Caco-2 (cell line): ENCODE measurements at regions of chr6 and their contacts with region 1.

Region 1: DNA sequence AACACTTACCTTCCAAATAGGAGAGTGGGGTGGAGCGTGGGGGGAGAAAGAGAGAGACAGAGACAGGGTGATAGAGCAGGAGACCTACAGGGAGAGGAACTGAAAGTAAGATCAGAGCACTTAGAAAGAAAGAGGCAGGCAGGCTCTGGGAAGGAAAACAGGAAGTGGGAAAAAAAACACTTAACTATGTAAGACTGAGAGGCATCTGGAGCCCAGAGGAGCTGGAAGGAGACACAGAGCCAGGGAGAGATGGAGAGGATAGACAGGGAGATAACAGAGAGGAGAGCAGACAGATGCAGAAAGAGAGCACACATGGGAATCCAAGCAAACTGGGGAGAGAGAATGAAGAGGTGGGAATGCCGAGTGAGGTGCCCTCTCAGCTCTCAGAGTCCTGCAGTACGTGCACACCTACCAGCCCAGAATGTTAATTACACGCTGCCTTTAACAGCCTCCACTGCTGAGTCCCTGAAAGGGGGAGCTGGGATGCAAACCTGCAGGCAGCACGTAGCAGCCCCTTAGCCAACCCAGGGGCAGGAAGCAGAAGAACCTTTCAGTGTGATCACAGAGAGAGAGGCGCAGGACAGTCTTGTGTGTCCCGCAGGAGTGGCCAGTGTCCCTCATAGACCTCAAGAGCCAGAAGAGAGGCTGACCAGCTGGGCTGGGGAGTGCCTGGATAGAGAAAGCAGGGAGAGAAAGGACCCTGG is 132.7 kb upstream of the LRFN2 start:
- DNase-seq: no peak
- H3K4me3 ChIP-seq: no peak overlapping the region
- H3K4me3 Mint-ChIP-seq: no peak overlapping the region
- H3K27ac Mint-ChIP-seq: peak overlapping the region; percentile 5
- H3K4me1 ChIP-seq: peaks cover 37% of the 10 kb centered on the region
- H3K4me1 Mint-ChIP-seq: peaks cover 36% of the 10 kb centered on the region
- H3K27me3 ChIP-seq: no peaks in the 10 kb centered on the region
- H3K27me3 Mint-ChIP-seq: no peaks in the 10 kb centered on the region
- CTCF ChIP-seq: no peak

Region 2: GRCh38 chr6:40456390-40457013 is 263.3 kb before region 1 on chr6:
- CTCF ChIA-PET with region 1: no interaction called
- POLR2A ChIA-PET with region 1: no interaction called
- intact Hi-C with region 1: no loop called
- DNase-seq: no peak
- H3K4me3 ChIP-seq: no peak overlapping the region
- H3K4me3 Mint-ChIP-seq: no peak overlapping the region
- H3K27ac Mint-ChIP-seq: no peak overlapping the region
- H3K4me1 ChIP-seq: no peaks in the 10 kb centered on the region
- H3K4me1 Mint-ChIP-seq: no peaks in the 10 kb centered on the region
- H3K27me3 ChIP-seq: no peaks in the 10 kb centered on the region; the same call in 1 of the 2 replicates
- H3K27me3 Mint-ChIP-seq: peaks cover 3% of the 10 kb centered on the region
- CTCF ChIP-seq: no peak

Region 3: GRCh38 chr6:40845553-40845952 is 125.7 kb after region 1 on chr6:
- CTCF ChIA-PET with region 1: no interaction called
- POLR2A ChIA-PET with region 1: no interaction called
- intact Hi-C with region 1: loop called (anchors 10 kb)
- DNase-seq: peak; percentile 54 to 57
- H3K4me3 ChIP-seq: no peak overlapping the region
- H3K4me3 Mint-ChIP-seq: no peak overlapping the region
- H3K27ac Mint-ChIP-seq: no peak overlapping the region
- H3K4me1 ChIP-seq: no peaks in the 10 kb centered on the region
- H3K4me1 Mint-ChIP-seq: no peaks in the 10 kb centered on the region
- H3K27me3 ChIP-seq: no peaks in the 10 kb centered on the region; the same call in 1 of the 2 replicates
- H3K27me3 Mint-ChIP-seq: peaks cover 26% of the 10 kb centered on the region
- CTCF ChIP-seq: peak; percentile 62 to 79

Region 4: DNA sequence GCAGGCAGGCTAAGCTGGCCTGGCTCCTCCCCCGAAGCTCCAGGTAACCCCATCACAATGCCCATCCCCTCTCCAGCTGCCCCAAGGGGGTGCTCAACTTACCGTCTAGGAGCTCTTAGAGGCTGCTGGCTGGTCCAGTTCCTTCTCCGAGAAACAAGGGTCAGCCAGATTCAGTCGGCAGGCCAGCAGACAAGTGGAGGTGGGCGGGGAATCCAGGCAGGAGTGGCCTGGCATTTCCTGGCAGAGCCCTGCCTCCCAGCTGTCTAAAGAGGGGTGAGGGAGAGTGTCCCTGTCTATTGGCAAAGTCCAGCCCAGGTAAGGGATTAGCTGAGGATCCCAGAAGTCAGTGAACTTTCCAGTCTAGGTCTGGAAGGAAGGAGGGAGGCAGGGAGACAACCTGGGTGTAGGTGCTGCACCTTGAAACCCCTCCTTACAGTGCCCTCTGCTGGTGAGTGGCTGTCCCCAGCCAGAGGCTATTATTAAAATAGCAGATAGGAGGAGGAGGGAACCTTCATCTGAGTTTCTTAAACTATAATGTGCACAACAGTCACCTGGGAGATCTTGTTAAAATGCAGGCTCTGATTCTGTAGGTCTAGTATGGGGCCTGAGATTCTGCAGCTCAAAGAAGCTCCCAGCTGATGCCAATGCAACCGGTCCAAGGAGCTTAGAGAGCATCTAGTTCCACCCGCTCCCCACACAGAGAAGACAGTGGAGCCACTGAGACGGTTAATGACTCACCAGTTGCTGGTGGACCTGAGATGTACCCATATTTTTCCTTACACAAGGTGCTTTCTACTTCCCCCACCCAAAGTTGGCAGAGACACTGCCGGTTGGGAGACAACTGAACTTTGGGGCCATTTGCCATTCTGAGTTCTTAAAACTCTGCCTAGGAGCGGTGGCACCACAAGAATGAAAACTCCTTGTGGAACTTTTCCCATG is 319.5 kb after region 1 on chr6 and contains the start of gene UNC5CL:
- CTCF ChIA-PET with region 1: no interaction called
- POLR2A ChIA-PET with region 1: no interaction called
- intact Hi-C with region 1: no loop called
- DNase-seq: peak; percentile 83 to 84
- H3K4me3 ChIP-seq: no peak within 1 kb of the TSS
- H3K4me3 Mint-ChIP-seq: peak within 1 kb of the TSS; percentile 63
- H3K27ac Mint-ChIP-seq: peak within 1 kb of the TSS; percentile 96
- H3K4me1 ChIP-seq: peaks cover 59% of the 10 kb centered on the region
- H3K4me1 Mint-ChIP-seq: peaks cover 41% of the 10 kb centered on the region
- H3K27me3 ChIP-seq: no peaks in the 10 kb centered on the region
- H3K27me3 Mint-ChIP-seq: no peaks in the 10 kb centered on the region
- CTCF ChIP-seq: peak; percentile 57 to 65
- total RNA-seq, gene UNC5CL: 4.5 and 5.5 TPM in 2 replicates